ENCODE measurements at regions of chr13 and their contacts with region 1.

Region 1: GRCh38 chr13:31538067-31539042 is 201.0 kb upstream of the RXFP2 start:
- DNase-seq: no peak
- H3K4me3 ChIP-seq: no peak overlapping the region
- H3K27me3 ChIP-seq: no peaks in the 10 kb centered on the region; the same call in 1 of the 2 replicates
- CTCF ChIP-seq: peak; percentile 78

Region 2: DNA sequence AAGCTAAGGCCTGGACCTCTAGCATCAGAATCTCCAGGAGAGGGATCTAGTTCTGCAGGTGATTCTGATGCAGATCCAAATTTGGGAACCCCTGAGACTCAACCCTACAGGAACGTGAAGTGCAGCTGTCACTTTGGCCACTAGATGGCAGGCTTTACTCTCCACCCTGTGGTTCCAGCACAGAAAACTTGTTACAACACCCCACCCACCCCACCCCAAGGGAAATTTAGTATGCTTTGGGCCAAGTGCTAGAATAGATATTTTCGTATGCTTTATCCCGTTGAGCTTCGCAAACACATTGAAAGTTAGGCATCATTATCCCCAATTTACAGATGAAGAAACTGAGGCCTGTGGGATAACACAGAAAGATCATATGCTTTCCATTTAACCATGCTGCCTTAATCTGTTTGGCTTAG is 106.6 kb before region 1 on chr13:
- CTCF ChIA-PET with region 1: interaction called, 17 read pairs
- POLR2A ChIA-PET with region 1: no interaction called
- DNase-seq: no peak
- H3K4me3 ChIP-seq: no peak overlapping the region
- H3K27me3 ChIP-seq: no peaks in the 10 kb centered on the region
- CTCF ChIP-seq: peak; percentile 83

Region 3: GRCh38 chr13:31518645-31519044 is 19.7 kb before region 1 on chr13:
- CTCF ChIA-PET with region 1: interaction called, 12 read pairs
- POLR2A ChIA-PET with region 1: no interaction called
- DNase-seq: no peak
- H3K4me3 ChIP-seq: no peak overlapping the region
- H3K27me3 ChIP-seq: no peaks in the 10 kb centered on the region; the same call in 1 of the 2 replicates
- CTCF ChIP-seq: no peak

Region 4: GRCh38 chr13:31556376-31556775 is 18.0 kb after region 1 on chr13:
- CTCF ChIA-PET with region 1: interaction called, 10 read pairs
- POLR2A ChIA-PET with region 1: no interaction called
- DNase-seq: peak; percentile 47
- H3K4me3 ChIP-seq: no peak overlapping the region
- H3K27me3 ChIP-seq: no peaks in the 10 kb centered on the region
- CTCF ChIP-seq: no peak

Region 5: GRCh38 chr13:31733647-31734046 is 195.3 kb after region 1 on chr13:
- CTCF ChIA-PET with region 1: interaction called, 29 read pairs
- POLR2A ChIA-PET with region 1: no interaction called
- DNase-seq: no peak
- H3K4me3 ChIP-seq: no peak overlapping the region
- H3K27me3 ChIP-seq: no peaks in the 10 kb centered on the region
- CTCF ChIP-seq: no peak

Region 6: DNA sequence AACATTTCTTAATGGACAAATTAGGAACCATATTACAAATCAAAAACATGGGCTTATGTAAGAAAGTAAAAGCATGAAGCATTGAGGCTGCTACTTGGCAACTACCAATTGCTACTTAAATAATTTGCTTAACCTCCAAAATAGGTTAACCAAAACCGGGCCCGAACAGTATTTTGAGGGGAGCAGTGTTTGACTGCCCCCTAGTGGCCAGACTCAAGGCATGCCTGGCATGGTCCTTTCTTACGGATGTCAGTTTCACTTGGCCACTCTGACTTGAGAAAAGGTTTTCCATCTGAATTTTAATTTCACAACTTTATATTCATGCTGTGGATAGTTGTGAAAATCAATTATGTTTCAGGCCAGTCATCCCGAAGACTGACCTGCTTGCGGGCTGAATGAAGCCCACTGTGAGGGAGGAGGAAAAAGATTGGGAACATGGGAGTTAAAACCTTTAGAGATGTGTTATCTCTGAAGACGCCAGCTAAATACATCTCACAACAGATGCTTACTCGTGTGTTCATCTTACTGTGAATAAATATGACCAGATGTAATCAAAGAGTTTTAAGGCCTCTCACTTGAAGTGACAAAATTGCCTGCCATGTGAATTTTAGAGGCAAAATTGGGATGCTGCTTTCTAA is 203.9 kb after region 1 on chr13:
- CTCF ChIA-PET with region 1: interaction called, 37 read pairs
- POLR2A ChIA-PET with region 1: no interaction called
- DNase-seq: no peak
- H3K4me3 ChIP-seq: no peak overlapping the region
- H3K27me3 ChIP-seq: no peaks in the 10 kb centered on the region
- CTCF ChIP-seq: peak; percentile 97

Region 7: DNA sequence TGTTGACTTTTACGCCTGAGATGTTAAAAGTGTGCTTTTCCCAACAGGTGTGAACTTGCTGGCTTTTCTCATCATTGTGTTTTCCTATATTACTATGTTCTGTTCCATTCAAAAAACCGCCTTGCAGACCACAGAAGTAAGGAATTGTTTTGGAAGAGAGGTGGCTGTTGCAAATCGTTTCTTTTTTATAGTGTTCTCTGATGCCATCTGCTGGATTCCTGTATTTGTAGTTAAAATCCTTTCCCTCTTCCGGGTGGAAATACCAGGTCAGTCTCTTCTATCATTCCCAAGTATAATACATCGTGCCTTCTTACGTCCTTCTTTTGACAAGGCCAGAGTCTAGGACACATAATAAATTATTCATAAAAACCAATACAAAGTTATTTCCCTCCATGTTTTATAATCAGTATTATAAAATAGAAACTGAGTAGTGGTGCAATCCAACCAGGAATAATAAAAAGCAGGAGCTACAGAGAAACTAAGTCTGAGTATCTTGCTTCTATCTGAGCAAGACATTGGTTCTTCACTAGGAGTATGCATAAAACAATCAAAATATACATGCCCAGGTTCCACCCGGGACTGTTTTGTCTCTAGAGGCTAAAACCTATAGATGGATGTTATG is 258.9 kb after region 1 on chr13:
- CTCF ChIA-PET with region 1: interaction called, 20 read pairs
- POLR2A ChIA-PET with region 1: no interaction called
- DNase-seq: no peak
- H3K4me3 ChIP-seq: no peak overlapping the region
- H3K27me3 ChIP-seq: no peaks in the 10 kb centered on the region
- CTCF ChIP-seq: peak; percentile 55